Dendritic cell treated with granulocyte-macrophage colony-stimulating factor and Interleukin-4, amounts not matched to agents 40 ng/mL and 50 ng/mL, for 4 days (primary cell): ENCODE measurements at regions of chr12 and their contacts with region 1.

Region 1: DNA sequence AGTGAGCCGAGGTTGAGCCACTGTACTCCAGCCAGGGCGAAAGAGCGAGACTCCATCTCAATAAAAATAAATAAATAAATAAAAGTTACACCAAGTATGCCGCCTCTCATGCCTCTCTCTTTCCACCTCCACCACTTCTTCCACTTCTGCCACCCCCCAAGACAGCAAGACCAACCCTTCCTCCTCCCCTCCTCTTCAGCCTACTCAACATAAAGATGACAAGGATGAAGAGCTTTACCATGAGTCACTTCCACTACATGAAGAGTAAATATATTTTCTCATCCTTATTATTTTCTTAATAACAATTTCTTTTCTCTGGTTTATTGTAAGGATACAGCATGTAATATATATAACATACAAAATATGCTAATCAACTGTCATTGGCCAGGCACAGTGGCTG is 3.6 kb upstream of the TMED2 start:
- H3K4me3 Mint-ChIP-seq: no peak overlapping the region
- H3K27ac Mint-ChIP-seq: no peak overlapping the region
- H3K4me1 Mint-ChIP-seq: peaks cover 20% of the 10 kb centered on the region
- H3K27me3 Mint-ChIP-seq: no peaks in the 10 kb centered on the region

Region 2: DNA sequence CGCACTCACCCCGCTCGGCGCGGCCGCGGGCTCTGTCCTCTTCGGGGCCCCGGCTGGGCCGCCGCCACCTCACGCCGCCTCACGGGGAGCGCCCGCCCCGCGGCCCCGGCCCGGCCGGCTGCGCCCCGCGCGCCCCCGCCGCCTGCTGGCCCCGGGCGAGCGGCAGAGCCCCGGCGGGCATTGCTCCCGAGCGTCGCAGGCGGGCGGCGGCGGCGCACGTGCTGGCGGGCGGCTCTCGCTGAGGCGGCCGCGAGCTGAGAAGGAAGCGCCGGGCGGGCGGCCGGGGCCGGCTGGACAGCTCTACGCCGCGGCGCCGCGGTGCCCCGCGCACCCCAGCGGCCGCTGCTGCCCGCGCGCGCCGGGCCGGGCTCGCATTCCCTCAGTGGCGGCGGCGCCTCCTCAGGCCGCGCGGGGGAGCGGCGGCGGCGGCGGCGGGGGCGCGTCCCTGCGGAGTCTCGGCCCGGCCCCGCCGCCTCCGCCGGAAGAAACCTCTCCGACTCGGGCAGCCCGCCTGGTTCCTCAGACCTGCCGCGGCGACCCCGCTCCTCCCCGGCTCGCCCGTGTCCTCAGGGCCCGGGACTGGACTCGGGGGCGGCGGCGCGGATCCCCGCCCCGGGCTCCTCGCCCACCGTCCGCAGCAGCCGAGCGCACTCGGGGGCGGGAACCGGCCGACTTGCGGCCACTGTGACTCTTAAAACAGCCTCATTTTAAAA is 429.9 kb before region 1 on chr12 and contains the start of gene PITPNM2:
- intact Hi-C with region 1: no loop called
- H3K4me3 Mint-ChIP-seq: peak within 1 kb of the TSS; percentile 68
- H3K27ac Mint-ChIP-seq: no peak within 1 kb of the TSS
- H3K4me1 Mint-ChIP-seq: peaks cover 19% of the 10 kb centered on the region
- H3K27me3 Mint-ChIP-seq: peaks cover 27% of the 10 kb centered on the region

Region 3: GRCh38 chr12:123388177-123388947 is 192.4 kb before region 1 on chr12:
- intact Hi-C with region 1: loop called (anchors 5 kb)
- H3K4me3 Mint-ChIP-seq: peak overlapping the region; percentile 79
- H3K27ac Mint-ChIP-seq: peak overlapping the region; percentile 94
- H3K4me1 Mint-ChIP-seq: peaks cover 56% of the 10 kb centered on the region
- H3K27me3 Mint-ChIP-seq: no peaks in the 10 kb centered on the region

Region 4: GRCh38 chr12:123436017-123436964 is 144.5 kb before region 1 on chr12 and contains the start of gene RILPL2:
- intact Hi-C with region 1: loop called (anchors 5 kb)
- H3K4me3 Mint-ChIP-seq: peak within 1 kb of the TSS; percentile 89
- H3K27ac Mint-ChIP-seq: peak within 1 kb of the TSS; percentile 92
- H3K4me1 Mint-ChIP-seq: peaks cover 52% of the 10 kb centered on the region
- H3K27me3 Mint-ChIP-seq: no peaks in the 10 kb centered on the region

Region 5: DNA sequence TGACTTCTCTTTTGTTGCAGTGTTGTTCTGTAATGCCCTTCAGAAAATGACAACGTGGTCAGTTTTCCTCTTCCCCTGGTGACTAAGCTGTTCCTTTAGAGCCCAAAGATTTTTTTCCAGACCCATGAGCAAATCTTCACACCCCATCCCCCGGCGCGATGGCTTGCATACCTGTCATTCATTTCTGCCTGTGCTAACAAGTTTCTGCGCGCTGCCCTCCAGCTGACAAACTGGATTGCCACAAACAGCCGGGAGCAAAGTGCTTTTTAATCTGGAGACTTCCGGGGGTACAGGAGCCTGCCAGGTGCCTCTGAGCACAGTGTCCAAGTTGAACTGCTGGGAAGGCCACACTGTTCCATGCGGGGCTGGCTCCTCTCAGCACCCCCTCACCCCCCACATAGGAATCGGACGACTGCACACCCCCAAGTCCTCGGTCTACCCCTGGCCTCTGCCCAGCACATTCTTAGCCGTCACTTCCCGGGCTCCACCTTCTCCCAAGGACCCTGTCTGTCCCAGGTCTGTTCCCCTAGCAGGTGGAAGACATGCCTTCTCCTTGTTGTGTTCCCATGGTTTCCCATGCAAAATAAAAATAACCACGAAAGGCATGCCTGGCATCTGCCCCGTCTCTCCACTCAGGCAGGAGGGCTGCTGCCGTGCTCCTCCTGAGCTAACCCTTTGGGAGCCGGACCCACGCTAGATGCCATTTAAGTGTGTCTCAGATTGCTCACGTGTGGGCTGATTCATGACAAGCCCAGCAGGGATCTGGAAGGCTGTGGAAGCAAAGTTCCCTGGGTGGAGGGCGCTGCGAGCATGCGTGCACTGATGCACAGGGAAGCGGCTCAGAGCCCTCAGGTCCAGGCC is 61.4 kb before region 1 on chr12:
- intact Hi-C with region 1: loop called (anchors 5 kb)
- H3K4me3 Mint-ChIP-seq: no peak overlapping the region
- H3K27ac Mint-ChIP-seq: peak overlapping the region; percentile 75
- H3K4me1 Mint-ChIP-seq: peaks cover 11% of the 10 kb centered on the region
- H3K27me3 Mint-ChIP-seq: peaks cover 15% of the 10 kb centered on the region

Region 6: DNA sequence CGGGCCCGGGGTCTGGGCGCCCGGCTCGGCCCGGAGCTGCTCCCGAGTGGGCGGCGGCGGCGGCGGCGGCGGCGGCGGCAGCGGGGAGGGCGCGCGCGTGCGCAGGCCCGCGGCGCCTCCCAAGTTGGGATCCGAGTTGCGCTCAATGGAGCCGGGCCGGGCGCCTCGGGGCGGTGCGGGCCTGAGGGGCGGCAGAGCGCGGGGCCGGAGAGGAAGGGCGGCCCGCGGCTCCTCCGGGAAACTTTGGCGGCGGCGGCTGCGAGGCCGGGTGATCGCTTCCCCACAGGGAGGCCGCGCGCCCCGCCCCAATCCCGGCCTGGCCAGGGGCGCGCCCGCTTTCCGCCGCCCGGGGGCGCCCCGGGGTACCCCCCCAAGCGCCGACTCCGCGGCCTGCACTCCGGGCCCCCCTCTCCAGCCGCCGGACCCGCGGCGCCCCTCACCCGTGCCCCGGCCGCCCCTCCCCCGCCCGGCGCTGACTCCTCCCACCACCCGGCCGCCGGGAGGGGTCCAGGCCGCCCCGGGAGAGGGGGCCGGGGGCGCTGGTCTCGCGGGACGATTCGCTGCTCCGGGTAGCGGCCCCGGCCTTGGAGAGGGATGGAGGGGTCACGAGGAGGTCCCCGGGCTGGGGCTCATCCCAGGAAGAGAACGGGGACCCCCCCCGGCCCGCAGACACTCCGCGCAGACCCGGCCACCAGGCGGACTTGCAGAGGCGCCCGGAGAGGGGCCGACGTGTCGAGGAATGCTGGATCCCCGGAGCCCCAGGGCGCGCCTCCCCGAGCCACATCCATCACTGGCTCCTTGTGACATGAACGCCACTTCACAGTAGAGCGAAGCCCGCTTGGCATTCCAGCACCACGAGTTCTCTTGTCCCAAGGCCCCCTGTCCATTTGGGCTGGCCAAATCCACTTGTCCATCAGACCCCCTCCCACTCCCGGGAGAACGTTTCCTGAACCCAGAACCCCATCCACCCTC is 46.8 kb before region 1 on chr12 and contains the start of gene RILPL1:
- intact Hi-C with region 1: loop called (anchors 1 kb)
- H3K4me3 Mint-ChIP-seq: peak within 1 kb of the TSS; percentile 80
- H3K27ac Mint-ChIP-seq: peak within 1 kb of the TSS; percentile 84
- H3K4me1 Mint-ChIP-seq: peaks cover 29% of the 10 kb centered on the region
- H3K27me3 Mint-ChIP-seq: peaks cover 72% of the 10 kb centered on the region

Region 7: DNA sequence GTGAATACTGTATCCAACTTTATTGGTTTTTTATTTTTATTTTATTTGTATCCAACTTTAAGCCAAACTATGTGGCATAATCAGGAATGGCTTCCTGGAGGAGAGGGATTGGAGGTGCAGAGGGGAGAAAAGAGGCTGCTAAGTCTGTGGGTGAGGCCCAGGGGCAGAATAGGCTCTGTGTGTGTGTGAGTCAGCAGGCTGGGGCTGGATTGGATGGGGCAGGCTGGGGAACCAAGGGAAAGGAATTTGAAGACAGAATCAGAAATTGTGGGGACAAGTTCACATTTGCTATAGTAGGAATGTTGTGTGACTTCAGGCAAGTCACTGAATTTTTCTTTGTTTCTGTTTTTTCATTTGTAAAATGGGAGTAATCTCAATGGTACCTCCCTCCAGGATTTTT is 34.5 kb before region 1 on chr12:
- intact Hi-C with region 1: no loop called
- H3K4me3 Mint-ChIP-seq: no peak overlapping the region
- H3K27ac Mint-ChIP-seq: no peak overlapping the region
- H3K4me1 Mint-ChIP-seq: peaks cover under 1% of the 10 kb centered on the region
- H3K27me3 Mint-ChIP-seq: peaks cover 18% of the 10 kb centered on the region

Region 8: DNA sequence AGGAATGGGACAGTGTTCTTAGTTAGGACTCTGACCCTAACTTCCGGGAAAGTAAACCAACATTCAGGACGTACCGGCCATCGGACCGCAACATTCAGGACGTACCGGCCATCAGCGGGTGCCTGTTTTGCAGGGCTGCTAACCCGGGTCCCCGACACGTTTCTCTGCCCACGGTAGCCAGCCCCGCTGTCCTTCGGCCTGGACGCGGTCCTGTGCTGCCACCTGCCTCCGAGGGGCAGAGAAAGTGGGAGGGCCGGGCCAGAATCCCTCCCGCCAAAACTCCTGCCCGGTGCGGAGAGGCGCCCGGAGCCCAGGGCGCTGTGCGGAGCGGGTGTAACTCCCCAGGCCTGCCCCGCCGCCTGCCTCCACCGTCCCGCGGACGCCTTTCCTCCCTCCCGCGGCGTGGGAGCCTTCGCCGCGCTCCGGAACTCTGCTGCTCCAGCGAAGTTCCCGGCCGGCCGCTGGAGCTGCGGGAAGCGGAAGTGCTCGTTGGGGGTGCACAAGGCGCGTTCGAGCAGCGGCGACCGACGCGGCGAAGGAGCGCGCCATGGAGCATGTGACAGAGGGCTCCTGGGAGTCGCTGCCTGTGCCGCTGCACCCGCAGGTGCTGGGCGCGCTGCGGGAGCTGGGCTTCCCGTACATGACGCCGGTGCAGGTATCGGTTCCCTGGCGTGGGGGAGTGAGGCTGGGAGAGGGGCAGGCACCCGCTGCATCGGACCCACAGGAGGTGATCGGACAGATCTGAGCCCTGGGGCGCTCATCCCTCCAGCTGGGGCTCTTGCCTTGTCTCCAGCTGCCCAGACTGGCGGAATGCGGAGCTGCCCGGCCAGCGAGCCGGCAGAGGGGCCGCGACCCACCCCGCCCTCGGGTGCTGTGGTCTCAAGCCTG is 21.1 kb after region 1 on chr12 and contains the start of gene DDX55:
- intact Hi-C with region 1: loop called (anchors 1 kb)
- H3K4me3 Mint-ChIP-seq: peak within 1 kb of the TSS; percentile 92
- H3K27ac Mint-ChIP-seq: peak within 1 kb of the TSS; percentile 87
- H3K4me1 Mint-ChIP-seq: peaks cover 18% of the 10 kb centered on the region
- H3K27me3 Mint-ChIP-seq: no peaks in the 10 kb centered on the region

Region 9: DNA sequence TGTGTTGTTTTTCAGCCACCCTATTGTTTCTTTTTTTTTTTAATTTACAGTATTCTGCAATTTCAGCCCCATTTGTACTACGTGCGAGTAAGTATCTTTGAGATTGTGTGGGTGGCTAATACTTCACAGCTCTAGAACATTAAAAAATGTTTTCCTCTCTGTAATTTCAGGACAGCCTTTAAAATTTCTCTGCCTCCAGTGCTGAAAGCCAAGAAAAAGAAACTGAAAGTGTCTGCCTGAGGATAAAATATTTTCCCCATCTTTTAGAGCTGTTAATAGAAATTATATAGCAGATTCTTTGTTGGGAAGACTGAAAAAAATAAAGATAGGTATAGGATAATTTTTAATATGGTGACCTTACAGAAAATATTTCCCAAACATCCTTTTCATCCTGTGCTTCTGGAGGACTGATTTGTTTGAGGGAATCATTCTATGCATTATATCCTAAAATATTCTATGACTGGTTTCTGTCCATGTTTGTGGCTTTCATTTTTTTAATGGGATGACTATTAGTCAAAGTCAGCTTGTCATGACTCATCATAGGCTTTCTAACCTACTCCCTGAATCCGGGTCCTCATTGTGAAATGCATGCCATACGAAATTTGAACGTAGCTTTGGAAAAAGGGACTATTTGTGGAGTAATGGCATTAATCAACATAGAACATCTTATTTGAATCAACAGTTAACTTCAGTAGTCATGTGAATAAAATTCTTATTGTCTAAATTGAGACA is 79.4 kb after region 1 on chr12:
- intact Hi-C with region 1: no loop called
- H3K4me3 Mint-ChIP-seq: no peak overlapping the region
- H3K27ac Mint-ChIP-seq: no peak overlapping the region
- H3K4me1 Mint-ChIP-seq: no peaks in the 10 kb centered on the region
- H3K27me3 Mint-ChIP-seq: no peaks in the 10 kb centered on the region

Region 10: DNA sequence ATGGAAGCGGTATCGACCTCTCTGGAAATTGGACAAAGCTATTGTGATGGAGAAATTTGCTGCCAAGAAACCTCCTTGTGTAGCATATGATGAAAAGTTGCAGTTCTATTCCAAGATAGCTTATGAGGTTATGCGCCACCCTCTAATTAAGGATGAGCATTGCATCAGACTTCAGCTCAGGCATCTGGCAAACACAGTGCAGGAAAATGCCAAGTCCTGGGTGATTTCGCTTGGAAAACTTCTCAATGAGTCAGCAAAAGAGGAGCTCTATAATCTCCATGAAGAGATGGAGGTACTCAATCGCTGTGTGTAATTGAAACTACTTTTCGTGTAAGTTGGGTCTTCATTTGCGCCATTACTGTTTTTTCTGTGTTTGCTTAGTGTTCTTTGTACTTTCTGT is 232.6 kb after region 1 on chr12:
- intact Hi-C with region 1: no loop called
- H3K4me3 Mint-ChIP-seq: no peak overlapping the region
- H3K27ac Mint-ChIP-seq: no peak overlapping the region
- H3K4me1 Mint-ChIP-seq: no peaks in the 10 kb centered on the region
- H3K27me3 Mint-ChIP-seq: peaks cover 4% of the 10 kb centered on the region